ENCODE measurements at regions of chr3 and their contacts with region 1.

Region 1: GRCh38 chr3:10115326-10116137 is at the start of gene BRK1:
- DNase-seq: peak; percentile 98
- ATAC-seq: peak; percentile 98
- H3K4me3 Mint-ChIP-seq: peak within 1 kb of the TSS; percentile 96
- H3K27ac Mint-ChIP-seq: peak within 1 kb of the TSS; percentile 92
- H3K4me1 Mint-ChIP-seq: peaks cover 35% of the 10 kb centered on the region
- H3K27me3 Mint-ChIP-seq: no peaks in the 10 kb centered on the region
- total RNA-seq, gene BRK1: 83.4 to 86.6 TPM

Region 2: DNA sequence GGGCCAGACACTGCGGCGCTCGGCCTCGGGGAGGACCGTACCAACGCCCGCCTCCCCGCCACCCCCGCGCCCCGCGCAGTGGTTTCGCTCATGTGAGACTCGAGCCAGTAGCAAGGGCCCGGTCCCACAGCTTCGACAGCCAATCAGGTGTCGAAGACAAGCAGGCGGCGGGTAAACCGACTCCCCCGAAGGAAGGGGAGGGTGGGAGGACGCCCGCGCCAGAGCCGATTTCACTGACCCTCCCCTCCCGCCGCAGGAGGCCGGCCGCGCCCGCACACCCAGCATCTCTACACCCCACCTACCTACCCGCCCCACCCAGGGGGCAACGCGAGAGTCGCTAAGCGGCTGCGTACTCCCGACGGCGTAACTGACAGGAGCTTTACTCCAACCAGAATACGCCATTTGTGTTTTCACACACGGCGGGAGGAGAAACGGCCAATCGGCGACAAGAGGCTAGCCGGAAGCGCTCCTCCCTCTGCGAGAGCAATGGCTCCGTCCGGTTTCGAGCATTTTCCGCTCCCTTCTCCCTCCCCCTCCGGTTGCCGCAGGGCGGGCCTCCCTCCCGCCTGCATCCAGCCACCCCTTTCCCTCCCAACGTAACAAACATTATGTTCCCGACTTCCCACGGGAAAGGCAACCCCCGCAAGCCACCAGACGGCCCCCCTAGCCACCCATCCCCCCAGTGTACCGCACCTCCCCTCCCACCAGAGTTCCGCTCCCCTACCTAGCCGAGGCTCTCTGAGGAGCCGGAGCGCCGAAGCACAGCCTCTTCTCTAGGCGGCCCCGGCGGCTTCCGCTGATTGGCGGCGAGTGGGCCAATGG is 718.6 kb before region 1 on chr3:
- CTCF ChIA-PET with region 1: no interaction called
- POLR2A ChIA-PET with region 1: no interaction called
- intact Hi-C with region 1: loop called in 1 of 2 experiments (anchors 1 kb)
- DNase-seq: peak; percentile 99
- ATAC-seq: peak; percentile 74
- H3K4me3 Mint-ChIP-seq: peak overlapping the region; percentile 93
- H3K27ac Mint-ChIP-seq: peak overlapping the region; percentile 98
- H3K4me1 Mint-ChIP-seq: peaks cover 63% of the 10 kb centered on the region
- H3K27me3 Mint-ChIP-seq: no peaks in the 10 kb centered on the region

Region 3: GRCh38 chr3:9843715-9844438 is 271.7 kb before region 1 on chr3 and contains the start of gene RPUSD3:
- CTCF ChIA-PET with region 1: no interaction called
- POLR2A ChIA-PET with region 1: no interaction called
- intact Hi-C with region 1: loop called in 1 of 2 experiments (anchors 1 kb)
- DNase-seq: peak; percentile 98
- ATAC-seq: peak; percentile 97
- H3K4me3 Mint-ChIP-seq: peak within 1 kb of the TSS; percentile 99
- H3K27ac Mint-ChIP-seq: peak within 1 kb of the TSS; percentile 96
- H3K4me1 Mint-ChIP-seq: peaks cover 28% of the 10 kb centered on the region
- H3K27me3 Mint-ChIP-seq: no peaks in the 10 kb centered on the region
- total RNA-seq, gene RPUSD3: 79.2 to 81.5 TPM

Region 4: DNA sequence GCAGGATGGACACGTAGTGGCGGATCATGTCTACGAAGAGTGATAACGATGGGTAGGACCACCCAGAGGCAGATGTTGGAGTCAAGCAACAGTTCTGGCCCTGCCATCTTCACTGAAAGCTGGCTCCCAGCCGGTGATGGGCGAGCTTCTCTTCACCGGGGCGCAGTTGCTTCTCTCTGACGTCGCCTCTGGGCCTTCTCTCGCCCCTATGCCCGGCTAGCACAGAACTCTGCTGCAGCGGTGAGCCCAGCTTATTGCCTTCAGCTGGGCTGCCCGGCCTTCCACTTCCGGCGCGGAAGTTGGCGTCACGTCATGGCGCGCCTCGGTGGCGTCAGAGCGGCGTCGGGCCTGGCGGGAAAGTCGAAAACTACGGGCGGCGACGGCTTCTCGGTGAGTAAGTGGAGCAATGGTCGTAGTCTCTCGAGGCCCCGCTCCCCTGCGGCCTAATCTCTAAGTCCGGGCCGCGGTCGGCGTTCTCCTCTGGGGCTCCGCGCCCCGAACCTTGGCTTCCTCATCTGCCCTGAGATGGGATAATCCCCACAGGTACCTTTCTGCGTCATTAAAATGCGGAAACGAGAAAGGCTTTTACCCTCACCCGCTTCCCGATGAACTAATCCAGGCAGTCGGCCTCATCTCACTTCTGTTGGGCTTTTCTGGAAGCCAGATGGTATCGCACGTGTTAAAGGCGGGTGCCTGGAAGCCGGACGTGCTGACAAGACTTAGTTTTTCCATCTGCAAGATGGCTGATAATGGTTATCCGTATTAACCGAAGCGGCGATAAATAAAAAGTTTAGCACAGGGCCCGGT is 89.2 kb before region 1 on chr3 and contains the start of gene FANCD2:
- CTCF ChIA-PET with region 1: no interaction called
- POLR2A ChIA-PET with region 1: no interaction called
- intact Hi-C with region 1: loop called in 1 of 2 experiments (anchors 1 kb)
- DNase-seq: peak; percentile 95
- ATAC-seq: peak; percentile 91
- H3K4me3 Mint-ChIP-seq: peak within 1 kb of the TSS; percentile 95
- H3K27ac Mint-ChIP-seq: peak within 1 kb of the TSS; percentile 99
- H3K4me1 Mint-ChIP-seq: peaks cover 25% of the 10 kb centered on the region
- H3K27me3 Mint-ChIP-seq: no peaks in the 10 kb centered on the region
- total RNA-seq, gene FANCD2: 86.4 to 87.7 TPM

Region 5: DNA sequence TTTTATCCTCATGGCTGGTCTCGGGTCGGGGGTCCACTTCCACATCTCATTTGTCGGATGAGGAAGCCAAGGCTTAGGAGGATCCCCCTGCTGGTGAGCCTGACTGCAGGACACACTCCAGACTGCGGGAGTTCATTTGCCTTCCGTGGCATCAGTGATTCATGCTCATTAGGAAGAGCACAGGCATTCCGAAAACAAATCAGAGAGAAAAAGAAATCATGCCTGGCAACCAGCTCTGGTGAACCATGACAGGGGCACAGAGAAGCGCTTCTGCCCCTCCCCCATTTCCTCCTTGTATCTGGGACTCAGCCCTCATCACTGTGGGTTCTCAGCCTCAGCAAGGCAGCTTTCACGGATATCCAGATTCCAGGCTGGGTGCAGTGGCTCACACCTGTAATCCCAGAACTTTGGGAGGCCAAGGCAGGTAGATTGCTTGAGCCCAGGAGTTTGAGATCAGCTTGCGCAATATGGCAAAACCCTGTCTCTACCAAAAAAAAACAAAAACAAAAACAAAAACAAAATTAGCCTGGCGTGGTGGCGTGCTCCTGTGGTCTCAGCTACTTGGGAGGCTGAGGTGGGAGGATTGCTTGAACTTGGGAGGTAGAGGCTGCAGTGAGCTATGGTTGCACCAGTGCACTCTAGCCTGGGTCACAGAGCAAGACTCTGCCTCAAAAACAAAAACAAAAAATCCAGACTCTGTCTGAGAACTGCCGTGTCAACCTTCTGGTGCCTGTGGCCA is 77.6 kb after region 1 on chr3:
- CTCF ChIA-PET with region 1: no interaction called
- POLR2A ChIA-PET with region 1: no interaction called
- intact Hi-C with region 1: loop called in 1 of 2 experiments (anchors 2 kb)
- DNase-seq: peak; percentile 85
- ATAC-seq: peak; percentile 45
- H3K4me3 Mint-ChIP-seq: peak overlapping the region; percentile 41
- H3K27ac Mint-ChIP-seq: peak overlapping the region; percentile 97
- H3K4me1 Mint-ChIP-seq: peaks cover 85% of the 10 kb centered on the region
- H3K27me3 Mint-ChIP-seq: no peaks in the 10 kb centered on the region

Region 6: GRCh38 chr3:10248184-10249080 is 132.9 kb after region 1 on chr3 and contains the start of gene TATDN2:
- CTCF ChIA-PET with region 1: interaction called, 5 read pairs
- POLR2A ChIA-PET with region 1: interaction called, 7 read pairs
- intact Hi-C with region 1: loop called (anchors 1 to 5 kb)
- DNase-seq: peak; percentile 97
- ATAC-seq: peak; percentile 94
- H3K4me3 Mint-ChIP-seq: peak within 1 kb of the TSS; percentile 97
- H3K27ac Mint-ChIP-seq: peak within 1 kb of the TSS; percentile 96
- H3K4me1 Mint-ChIP-seq: peaks cover 63% of the 10 kb centered on the region
- H3K27me3 Mint-ChIP-seq: no peaks in the 10 kb centered on the region
- total RNA-seq, gene TATDN2: 40.0 to 40.2 TPM